PC-3 (cell line): ENCODE measurements at regions of chr17 and their contacts with region 1.

Region 1: GRCh38 chr17:44636562-44636961 is 19.7 kb upstream of the MEIOC start:
- DNase-seq: peak; percentile 68
- ATAC-seq: peak; percentile 80
- H3K4me3 ChIP-seq: no peak overlapping the region
- H3K27ac ChIP-seq: no peak overlapping the region
- H3K4me1 ChIP-seq: no peaks in the 10 kb centered on the region
- H3K27me3 ChIP-seq: no peaks in the 10 kb centered on the region
- CTCF ChIP-seq: peak; percentile 74

Region 2: DNA sequence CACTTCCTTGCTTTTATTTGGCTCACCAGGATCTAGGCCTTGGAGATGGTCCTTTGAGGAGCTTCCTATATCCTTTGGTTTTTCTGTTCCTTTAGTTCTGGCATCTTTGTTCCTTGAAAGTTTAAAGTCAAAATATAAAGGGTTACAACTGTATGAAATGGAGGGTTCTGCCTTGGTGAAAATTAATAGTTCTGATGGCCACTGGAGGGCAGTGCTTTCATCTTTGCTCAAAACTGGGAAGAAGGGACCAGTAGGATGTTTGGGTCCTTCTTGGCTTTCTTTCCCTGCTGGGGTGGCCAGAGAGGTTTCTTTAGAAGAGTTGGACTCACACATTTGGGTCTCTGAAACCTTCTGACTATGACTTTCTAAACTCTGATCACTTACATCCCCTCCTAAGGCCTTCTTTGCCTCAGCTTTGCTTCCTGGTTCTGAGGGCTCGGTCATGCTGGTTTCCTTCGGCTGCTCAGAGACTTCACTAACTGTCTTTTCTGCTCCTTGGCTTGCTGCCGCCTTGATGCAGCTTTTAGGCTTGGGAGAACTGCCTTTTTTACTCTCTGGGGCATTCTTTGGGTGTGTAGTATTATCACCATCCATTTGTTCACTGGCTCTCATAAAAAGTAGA is 236.2 kb before region 1 on chr17:
- CTCF ChIA-PET with region 1: no interaction called
- POLR2A ChIA-PET with region 1: no interaction called
- intact Hi-C with region 1: loop called (anchors 5 kb)
- DNase-seq: peak; percentile 53
- ATAC-seq: peak; percentile 77
- H3K4me3 ChIP-seq: no peak overlapping the region
- H3K27ac ChIP-seq: no peak overlapping the region
- H3K4me1 ChIP-seq: no peaks in the 10 kb centered on the region
- H3K27me3 ChIP-seq: no peaks in the 10 kb centered on the region
- CTCF ChIP-seq: peak; percentile 88

Region 3: GRCh38 chr17:44565866-44566443 is 70.6 kb before region 1 on chr17:
- CTCF ChIA-PET with region 1: no interaction called
- POLR2A ChIA-PET with region 1: interaction called, 10 read pairs
- intact Hi-C with region 1: no loop called
- DNase-seq: peak; percentile 47
- ATAC-seq: no peak
- H3K4me3 ChIP-seq: no peak overlapping the region
- H3K27ac ChIP-seq: no peak overlapping the region
- H3K4me1 ChIP-seq: 0 out of 2 replicates have a peak, but pooled peaks cover 5% of the 10 kb centered on the region
- H3K27me3 ChIP-seq: no peaks in the 10 kb centered on the region
- CTCF ChIP-seq: peak; percentile 90